Gastrocnemius medialis (tissue), 4 donors: ENCODE measurements at regions of chr10 and their contacts with region 1.

Region 1: GRCh38 chr10:110746254-110746826 is 102.2 kb downstream of the RBM20 start:
- DNase-seq: peak; percentile 21 to 63
- ATAC-seq: peak; percentile 74 to 93
- H3K4me3 ChIP-seq: no peak overlapping the region
- H3K27ac ChIP-seq: peak overlapping the region in 1 of 4 donors; percentile 18
- H3K4me1 ChIP-seq: peaks cover 3 to 6% of the 10 kb centered on the region in 2 donors
- H3K27me3 ChIP-seq: no peaks in the 10 kb centered on the region
- CTCF ChIP-seq: peak; percentile 76 to 88 (median 86)
- POLR2A ChIP-seq: no peak

Region 2: GRCh38 chr10:110610308-110610774 is 136.0 kb before region 1 on chr10:
- in situ Hi-C with region 1: no loop called
- intact Hi-C with region 1: loop called (anchors 2 kb)
- DNase-seq: peak; percentile 27 to 45
- ATAC-seq: peak; percentile 78 to 79
- H3K4me3 ChIP-seq: no peak overlapping the region
- H3K27ac ChIP-seq: peak overlapping the region; percentile 64 to 77 (median 72)
- H3K4me1 ChIP-seq: peaks cover 10 to 14% of the 10 kb centered on the region in 2 donors
- H3K27me3 ChIP-seq: no peaks in the 10 kb centered on the region
- CTCF ChIP-seq: peak; percentile 67 to 88 (median 81)
- POLR2A ChIP-seq: no peak

Region 3: DNA sequence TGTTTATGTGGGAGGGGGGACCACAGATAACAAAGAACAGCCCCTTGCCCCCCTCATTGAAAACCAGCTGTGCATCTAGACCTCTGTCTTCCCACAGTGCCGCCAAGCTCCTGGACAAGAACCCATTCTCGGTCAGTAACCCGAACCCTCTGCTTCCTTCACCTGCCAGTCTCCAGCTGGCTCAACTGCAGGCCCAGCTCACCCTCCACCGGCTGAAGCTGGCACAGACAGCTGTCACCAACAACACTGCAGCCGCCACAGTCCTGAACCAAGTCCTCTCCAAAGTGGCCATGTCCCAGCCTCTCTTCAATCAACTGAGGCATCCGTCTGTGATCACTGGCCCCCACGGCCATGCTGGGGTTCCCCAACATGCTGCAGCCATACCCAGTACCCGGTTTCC is 34.4 kb after region 1 on chr10:
- in situ Hi-C with region 1: no loop called
- intact Hi-C with region 1: loop called (anchors 1 kb)
- DNase-seq: peak; percentile 79 to 90
- ATAC-seq: peak; percentile 81 to 90
- H3K4me3 ChIP-seq: no peak overlapping the region
- H3K27ac ChIP-seq: peak overlapping the region; percentile 65 to 82 (median 68)
- H3K4me1 ChIP-seq: peaks cover 51 to 55% of the 10 kb centered on the region in 2 donors
- H3K27me3 ChIP-seq: no peaks in the 10 kb centered on the region
- CTCF ChIP-seq: peak in 4 of 5 experiments; percentile 19 to 55 (median 42)
- POLR2A ChIP-seq: no peak

Region 4: GRCh38 chr10:110871298-110872084 is 125.2 kb after region 1 on chr10 and contains the start of gene PDCD4:
- in situ Hi-C with region 1: no loop called
- intact Hi-C with region 1: loop called (anchors 5 kb)
- DNase-seq: peak; percentile 98 to 99
- ATAC-seq: peak; percentile 93 to 96
- H3K4me3 ChIP-seq: peak within 1 kb of the TSS; percentile 71 to 100 (median 88)
- H3K27ac ChIP-seq: peak within 1 kb of the TSS; percentile 85 to 96 (median 96)
- H3K4me1 ChIP-seq: peaks cover 9 to 20% of the 10 kb centered on the region in 2 donors
- H3K27me3 ChIP-seq: no peaks in the 10 kb centered on the region
- CTCF ChIP-seq: no peak
- POLR2A ChIP-seq: peak; percentile 77 to 95
- total RNA-seq, gene PDCD4: 6.4 to 15.6 (median 9.8) TPM

Region 5: DNA sequence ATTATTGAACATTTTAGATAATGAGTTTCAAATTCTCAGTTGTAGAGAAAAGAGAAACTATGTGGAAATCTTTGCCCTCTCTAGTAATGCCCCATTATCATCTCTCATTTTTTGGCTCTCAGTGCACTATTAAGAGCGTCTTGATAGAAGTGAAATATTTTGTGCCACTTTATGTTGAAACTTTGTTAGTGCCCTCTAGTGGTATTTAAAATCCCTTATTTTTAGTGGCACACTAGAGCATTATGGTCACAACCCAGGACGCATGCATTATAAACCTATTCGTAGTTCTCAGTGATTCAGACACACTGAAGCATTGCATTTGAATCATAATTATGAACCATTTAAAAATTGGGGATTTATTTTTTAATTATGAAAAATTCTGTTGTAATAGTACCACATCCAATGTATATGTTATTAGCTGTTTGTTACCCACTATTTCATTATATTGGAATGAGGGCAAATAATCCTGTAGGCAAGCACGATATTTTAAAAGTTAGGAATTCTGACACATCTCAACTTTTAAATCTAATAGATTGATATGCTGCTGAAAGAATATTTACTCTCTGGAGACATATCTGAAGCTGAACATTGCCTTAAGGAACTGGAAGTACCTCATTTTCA is 147.3 kb after region 1 on chr10:
- in situ Hi-C with region 1: loop called in 2 of 4 experiments (anchors 5 to 10 kb)
- intact Hi-C with region 1: loop called (anchors 2 kb)
- DNase-seq: no peak
- ATAC-seq: peak in 1 of 2 donors; percentile 85
- H3K4me3 ChIP-seq: no peak overlapping the region
- H3K27ac ChIP-seq: no peak overlapping the region
- H3K4me1 ChIP-seq: no peaks in the 10 kb centered on the region
- H3K27me3 ChIP-seq: no peaks in the 10 kb centered on the region
- CTCF ChIP-seq: peak; percentile 53 to 66 (median 59)
- POLR2A ChIP-seq: no peak

Region 6: GRCh38 chr10:110977662-110978061 is 231.3 kb after region 1 on chr10:
- in situ Hi-C with region 1: no loop called
- intact Hi-C with region 1: no loop called
- DNase-seq: no peak
- ATAC-seq: no peak
- H3K4me3 ChIP-seq: no peak overlapping the region
- H3K27ac ChIP-seq: no peak overlapping the region
- H3K4me1 ChIP-seq: peaks cover 8 to 11% of the 10 kb centered on the region in 2 donors
- H3K27me3 ChIP-seq: no peaks in the 10 kb centered on the region
- CTCF ChIP-seq: no peak
- POLR2A ChIP-seq: no peak